ENCODE measurements at regions of chr1 and their contacts with region 1.

Region 1: GRCh38 chr1:38834937-38835827 is 24.4 kb downstream of the RRAGC start:
- DNase-seq: no peak
- ATAC-seq: peak; percentile 80 to 86

Region 2: DNA sequence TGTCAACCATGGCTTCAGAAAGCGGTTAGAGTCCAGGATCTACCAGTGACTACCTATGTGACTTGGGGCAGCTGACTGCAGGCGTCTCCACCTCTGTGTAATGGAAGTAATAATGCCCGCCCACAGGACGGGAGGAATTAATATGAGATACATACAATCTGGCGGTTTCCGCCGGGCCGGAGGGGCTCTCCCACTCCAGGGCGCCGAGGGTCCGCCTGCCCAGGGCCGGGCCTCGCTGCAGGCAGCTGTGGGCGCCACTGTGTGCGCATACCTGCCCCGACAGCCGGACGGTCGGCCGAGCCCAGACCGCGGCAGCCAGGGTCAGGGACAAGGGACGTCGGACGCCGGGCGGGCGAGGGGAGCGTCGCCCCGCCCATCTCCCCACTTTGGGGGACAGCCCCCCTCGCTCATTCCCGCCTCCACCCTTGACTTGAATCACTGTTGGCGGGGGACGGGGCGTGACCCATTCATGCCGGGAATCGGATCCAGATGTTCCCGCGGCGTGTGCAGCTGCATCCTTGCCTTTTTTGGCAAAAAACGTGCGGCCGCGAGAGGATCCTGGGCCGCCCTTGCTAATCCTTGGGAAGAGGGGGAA is 839.3 kb before region 1 on chr1:
- intact Hi-C with region 1: loop called in 1 of 2 experiments (anchors 10 kb)
- DNase-seq: peak; percentile 91
- ATAC-seq: peak; percentile 61 to 76

Region 3: GRCh38 chr1:38026592-38027200 is 808.5 kb before region 1 on chr1:
- intact Hi-C with region 1: loop called in 1 of 2 experiments (anchors 10 kb)
- DNase-seq: no peak
- ATAC-seq: no peak

Region 4: GRCh38 chr1:38046884-38047602 is 788.1 kb before region 1 on chr1:
- intact Hi-C with region 1: loop called in 1 of 2 experiments (anchors 10 kb)
- DNase-seq: peak; percentile 90
- ATAC-seq: peak; percentile 95 to 98